ENCODE measurements at regions of chr9 and their contacts with region 1.

Region 1: GRCh38 chr9:137605121-137606004 is at the start of gene ARRDC1:
- DNase-seq: peak; percentile 88 to 96 (median 94)
- H3K4me3 ChIP-seq: peak within 1 kb of the TSS; percentile 41 to 93 (median 74)
- H3K4me3 Mint-ChIP-seq: peak within 1 kb of the TSS; percentile 86 to 96
- H3K27ac ChIP-seq: peak within 1 kb of the TSS; percentile 80 to 82
- H3K27ac Mint-ChIP-seq: peak within 1 kb of the TSS; percentile 69 to 95 (median 91)
- H3K4me1 ChIP-seq: peaks cover 62 to 64% of the 10 kb centered on the region in 2 donors
- H3K4me1 Mint-ChIP-seq: peaks cover 68% of the 10 kb centered on the region
- H3K27me3 ChIP-seq: no peaks in the 10 kb centered on the region
- H3K27me3 Mint-ChIP-seq: peaks cover 0 to 10% (median 6%) of the 10 kb centered on the region in 3 donors
- CTCF ChIP-seq: no peak
- polyA plus RNA-seq, gene ARRDC1: 83.2 to 454 (median 87.6) TPM

Region 2: DNA sequence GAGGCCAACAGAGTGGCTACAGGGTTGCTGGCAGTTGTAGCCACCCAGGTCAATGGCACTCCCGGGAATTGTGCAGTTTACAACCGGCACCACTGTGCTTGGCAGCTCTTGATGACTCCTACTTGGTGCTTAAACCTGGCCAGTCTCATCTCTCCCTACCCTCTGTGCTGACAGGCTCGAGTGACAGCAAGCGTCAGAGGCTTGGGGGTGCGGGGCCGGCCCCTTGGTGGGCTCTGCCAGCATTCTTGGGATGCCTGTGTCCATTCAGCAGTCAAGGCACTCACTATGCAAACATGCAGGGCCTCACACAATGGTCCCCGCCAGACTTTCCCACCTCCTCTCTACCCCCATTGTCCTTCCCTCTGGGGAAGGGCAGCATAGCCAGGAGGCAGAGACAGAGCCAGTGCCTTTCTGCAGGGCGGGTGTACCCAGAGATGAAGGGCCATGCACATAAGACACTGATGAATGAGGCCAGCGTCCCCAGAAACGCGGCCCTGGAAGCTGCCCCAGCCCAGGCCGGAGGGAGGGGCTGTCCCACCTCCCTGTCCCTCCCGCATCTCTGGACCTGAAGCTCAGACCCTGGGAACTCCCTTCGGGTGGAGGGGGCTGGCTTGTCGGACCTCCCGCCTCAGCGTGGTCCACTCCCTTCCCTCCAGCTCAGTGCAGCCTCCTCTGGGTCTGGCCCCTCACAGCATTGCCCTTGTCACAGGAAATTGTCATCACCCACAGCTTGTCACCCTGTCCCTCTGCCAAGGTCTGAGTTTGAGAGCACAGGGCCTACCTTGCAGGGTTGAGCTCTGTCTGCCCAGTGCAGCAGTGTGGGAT is 1033.1 kb before region 1 on chr9:
- intact Hi-C with region 1: no loop called
- DNase-seq: no peak
- H3K4me3 ChIP-seq: no peak overlapping the region
- H3K4me3 Mint-ChIP-seq: no peak overlapping the region
- H3K27ac ChIP-seq: no peak overlapping the region
- H3K27ac Mint-ChIP-seq: no peak overlapping the region
- H3K4me1 ChIP-seq: peaks cover 0 to 11% of the 10 kb centered on the region in 2 donors
- H3K4me1 Mint-ChIP-seq: peaks cover 5% of the 10 kb centered on the region
- H3K27me3 ChIP-seq: no peaks in the 10 kb centered on the region
- H3K27me3 Mint-ChIP-seq: peaks cover 0 to 11% (median 7%) of the 10 kb centered on the region in 3 donors
- CTCF ChIP-seq: no peak

Region 3: DNA sequence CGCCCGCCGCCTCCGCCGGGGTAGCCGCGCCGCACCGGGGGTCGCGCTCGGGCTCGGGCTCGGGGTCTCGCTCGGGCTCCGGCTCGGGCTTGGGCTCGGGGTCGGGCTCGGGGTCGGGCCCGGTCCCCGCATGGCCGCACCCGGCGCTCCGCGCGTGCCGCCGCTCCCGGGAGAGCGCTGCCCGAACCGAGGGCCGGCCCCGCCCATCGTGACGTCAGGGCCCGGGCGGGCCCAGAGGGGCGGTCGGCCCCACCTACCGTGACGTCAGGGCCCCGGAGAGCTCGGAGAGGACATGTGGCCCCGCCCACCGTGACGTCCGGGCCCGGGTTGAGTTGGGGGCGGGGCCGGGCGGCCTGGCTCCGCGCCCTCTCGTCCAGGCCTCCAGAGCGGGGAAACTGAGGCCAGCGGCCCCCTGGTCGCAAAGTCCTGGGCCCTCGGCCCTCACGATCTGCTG is 146.2 kb before region 1 on chr9 and contains the start of gene NSMF:
- intact Hi-C with region 1: loop called in 1 of 2 experiments (anchors 10 kb)
- DNase-seq: peak; percentile 90 to 95 (median 92)
- H3K4me3 ChIP-seq: peak within 1 kb of the TSS; percentile 28 to 75 (median 46)
- H3K4me3 Mint-ChIP-seq: peak within 1 kb of the TSS; percentile 59 to 76
- H3K27ac ChIP-seq: peak within 1 kb of the TSS; percentile 31 to 87
- H3K27ac Mint-ChIP-seq: peak within 1 kb of the TSS; percentile 54 to 89 (median 72)
- H3K4me1 ChIP-seq: peaks cover 26 to 46% of the 10 kb centered on the region in 2 donors
- H3K4me1 Mint-ChIP-seq: peaks cover 10% of the 10 kb centered on the region
- H3K27me3 ChIP-seq: peaks cover 0 to 15% of the 10 kb centered on the region in 2 donors
- H3K27me3 Mint-ChIP-seq: peaks cover 5 to 19% (median 11%) of the 10 kb centered on the region in 3 donors
- CTCF ChIP-seq: no peak
- polyA plus RNA-seq, gene NSMF: 4.6 to 68.4 (median 5.3) TPM

Region 4: DNA sequence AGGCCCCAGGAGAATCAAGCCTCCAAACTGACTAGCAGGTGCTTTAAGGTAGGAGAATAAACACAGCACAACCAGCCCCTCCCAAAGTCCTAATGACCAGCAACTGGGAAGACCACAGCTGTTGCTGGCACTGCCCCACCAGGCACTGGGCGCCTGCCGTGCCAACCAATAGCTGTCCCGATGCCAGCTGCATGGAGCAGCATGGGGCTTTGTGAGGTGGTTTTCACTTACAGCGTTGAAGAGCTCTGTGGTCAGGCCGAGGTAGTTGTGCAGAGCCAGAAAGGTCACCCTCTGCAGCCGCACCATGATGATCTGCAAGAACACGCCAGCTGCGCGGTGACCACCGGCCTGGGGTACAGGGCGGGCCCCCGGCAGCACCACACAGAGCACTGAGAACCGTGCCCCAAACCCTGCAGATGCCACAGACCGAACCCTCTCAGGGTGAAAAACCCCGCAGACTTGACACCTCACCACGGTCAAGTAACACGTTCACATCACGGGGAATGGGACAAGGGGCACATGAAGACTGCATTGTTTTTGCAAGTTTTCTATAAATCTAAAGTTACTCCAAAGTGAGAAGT is 83.9 kb before region 1 on chr9:
- intact Hi-C with region 1: no loop called
- DNase-seq: no peak
- H3K4me3 ChIP-seq: no peak overlapping the region
- H3K4me3 Mint-ChIP-seq: no peak overlapping the region
- H3K27ac ChIP-seq: no peak overlapping the region
- H3K27ac Mint-ChIP-seq: no peak overlapping the region
- H3K4me1 ChIP-seq: no peaks in the 10 kb centered on the region
- H3K4me1 Mint-ChIP-seq: peaks cover 2% of the 10 kb centered on the region
- H3K27me3 ChIP-seq: no peaks in the 10 kb centered on the region
- H3K27me3 Mint-ChIP-seq: peaks cover 0 to 2% (median 2%) of the 10 kb centered on the region in 3 donors
- CTCF ChIP-seq: no peak

Region 5: DNA sequence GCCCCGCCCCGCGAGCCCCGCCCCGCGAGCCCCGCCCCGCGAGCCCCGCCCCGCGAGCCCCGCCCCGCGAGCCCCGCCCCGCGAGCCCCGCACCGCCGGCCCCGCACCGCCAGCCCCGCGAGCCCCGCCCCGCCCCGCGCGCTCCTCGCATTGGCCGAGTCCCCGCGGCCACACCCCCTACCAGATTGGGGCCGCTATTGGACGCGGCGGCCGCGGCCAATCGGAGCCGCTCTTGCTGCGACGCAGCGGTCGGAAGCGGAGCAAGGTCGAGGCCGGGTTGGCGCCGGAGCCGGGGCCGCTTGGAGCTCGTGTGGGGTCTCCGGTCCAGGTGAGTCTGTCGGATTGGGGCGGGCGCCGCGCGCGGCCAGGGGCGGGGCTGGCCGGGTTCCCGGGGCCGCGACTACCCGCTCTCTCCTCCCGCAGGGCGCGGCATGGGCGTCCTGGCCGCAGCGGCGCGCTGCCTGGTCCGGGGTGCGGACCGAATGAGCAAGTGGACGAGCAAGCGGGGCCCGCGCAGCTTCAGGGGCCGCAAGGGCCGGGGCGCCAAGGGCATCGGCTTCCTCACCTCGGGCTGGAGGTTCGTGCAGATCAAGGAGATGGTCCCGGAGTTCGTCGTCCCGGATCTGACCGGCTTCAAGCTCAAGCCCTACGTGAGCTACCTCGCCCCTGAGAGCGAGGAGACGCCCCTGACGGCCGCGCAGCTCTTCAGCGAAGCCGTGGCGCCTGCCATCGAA is 53.5 kb before region 1 on chr9 and contains the start of gene MRPL41:
- intact Hi-C with region 1: loop called in 1 of 2 experiments (anchors 10 kb)
- DNase-seq: peak; percentile 79 to 90 (median 86)
- H3K4me3 ChIP-seq: peak within 1 kb of the TSS; percentile 50 to 91 (median 74)
- H3K4me3 Mint-ChIP-seq: peak within 1 kb of the TSS; percentile 77 to 78
- H3K27ac ChIP-seq: peak within 1 kb of the TSS in 1 of 2 donors; percentile 55
- H3K27ac Mint-ChIP-seq: peak within 1 kb of the TSS in 4 of 7 donors; percentile 20 to 79 (median 72)
- H3K4me1 ChIP-seq: peaks cover 16 to 24% of the 10 kb centered on the region in 2 donors
- H3K4me1 Mint-ChIP-seq: peaks cover 13% of the 10 kb centered on the region
- H3K27me3 ChIP-seq: no peaks in the 10 kb centered on the region
- H3K27me3 Mint-ChIP-seq: no peaks in the 10 kb centered on the region
- CTCF ChIP-seq: no peak
- polyA plus RNA-seq, gene MRPL41: 17.3 to 49.4 (median 33.2) TPM

Region 6: DNA sequence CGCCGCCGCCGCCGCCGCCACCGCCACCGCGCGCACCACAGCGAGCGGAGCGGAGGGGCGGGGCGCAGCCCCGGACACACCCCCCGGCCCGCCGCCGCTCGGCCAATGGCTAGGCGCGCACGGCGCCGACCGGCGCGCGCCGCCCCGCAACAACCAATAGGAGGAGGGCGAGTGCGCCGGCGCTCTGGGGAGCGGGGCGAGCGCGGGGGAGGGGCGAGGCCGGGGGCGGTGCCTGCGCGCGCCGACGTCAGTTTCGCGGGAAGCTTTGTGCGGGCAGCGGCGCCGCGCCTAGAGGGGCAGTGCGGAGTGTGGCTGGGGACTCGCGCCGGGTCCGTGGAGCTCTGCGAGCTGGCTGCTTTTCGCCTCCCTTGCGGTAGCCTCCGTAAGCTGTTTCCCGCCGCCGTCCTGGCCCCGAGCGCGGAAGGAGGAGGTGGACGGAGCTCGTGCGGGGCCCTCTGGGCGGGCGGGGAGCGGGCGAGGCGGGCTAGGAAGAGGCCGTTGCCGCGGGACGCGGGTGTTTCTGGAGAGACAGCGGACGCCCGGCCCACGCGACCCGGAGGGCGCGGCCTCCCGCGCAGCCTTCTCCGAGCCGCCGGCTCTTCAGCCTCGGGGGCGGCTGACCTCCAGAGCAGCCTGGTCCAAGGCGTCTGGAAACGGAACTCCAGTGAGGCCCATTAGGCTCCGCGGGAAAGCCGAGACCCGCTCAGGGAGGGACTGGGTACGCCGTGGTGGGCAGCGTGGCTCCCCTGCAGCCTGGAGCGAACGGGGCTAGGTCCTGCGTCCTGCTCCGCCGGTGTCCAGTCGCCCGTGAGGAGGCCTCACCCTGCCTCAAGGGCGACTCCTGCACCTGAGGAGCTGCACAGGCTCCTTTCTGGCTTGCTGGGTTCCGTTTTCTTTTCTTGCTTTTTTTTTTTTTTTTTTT is 14.6 kb before region 1 on chr9 and contains the start of gene ZMYND19:
- intact Hi-C with region 1: loop called (anchors 2 kb)
- DNase-seq: peak; percentile 83 to 90 (median 86)
- H3K4me3 ChIP-seq: peak within 1 kb of the TSS; percentile 49 to 87 (median 56)
- H3K4me3 Mint-ChIP-seq: peak within 1 kb of the TSS; percentile 96 to 100
- H3K27ac ChIP-seq: peak within 1 kb of the TSS in 1 of 2 donors; percentile 71
- H3K27ac Mint-ChIP-seq: peak within 1 kb of the TSS; percentile 81 to 96 (median 92)
- H3K4me1 ChIP-seq: peaks cover 28 to 37% of the 10 kb centered on the region in 2 donors
- H3K4me1 Mint-ChIP-seq: peaks cover 28% of the 10 kb centered on the region
- H3K27me3 ChIP-seq: no peaks in the 10 kb centered on the region
- H3K27me3 Mint-ChIP-seq: peaks cover 0 to 4% (median 2%) of the 10 kb centered on the region in 3 donors
- CTCF ChIP-seq: no peak
- polyA plus RNA-seq, gene ZMYND19: 1.9 to 12.4 (median 4.5) TPM

Region 7: DNA sequence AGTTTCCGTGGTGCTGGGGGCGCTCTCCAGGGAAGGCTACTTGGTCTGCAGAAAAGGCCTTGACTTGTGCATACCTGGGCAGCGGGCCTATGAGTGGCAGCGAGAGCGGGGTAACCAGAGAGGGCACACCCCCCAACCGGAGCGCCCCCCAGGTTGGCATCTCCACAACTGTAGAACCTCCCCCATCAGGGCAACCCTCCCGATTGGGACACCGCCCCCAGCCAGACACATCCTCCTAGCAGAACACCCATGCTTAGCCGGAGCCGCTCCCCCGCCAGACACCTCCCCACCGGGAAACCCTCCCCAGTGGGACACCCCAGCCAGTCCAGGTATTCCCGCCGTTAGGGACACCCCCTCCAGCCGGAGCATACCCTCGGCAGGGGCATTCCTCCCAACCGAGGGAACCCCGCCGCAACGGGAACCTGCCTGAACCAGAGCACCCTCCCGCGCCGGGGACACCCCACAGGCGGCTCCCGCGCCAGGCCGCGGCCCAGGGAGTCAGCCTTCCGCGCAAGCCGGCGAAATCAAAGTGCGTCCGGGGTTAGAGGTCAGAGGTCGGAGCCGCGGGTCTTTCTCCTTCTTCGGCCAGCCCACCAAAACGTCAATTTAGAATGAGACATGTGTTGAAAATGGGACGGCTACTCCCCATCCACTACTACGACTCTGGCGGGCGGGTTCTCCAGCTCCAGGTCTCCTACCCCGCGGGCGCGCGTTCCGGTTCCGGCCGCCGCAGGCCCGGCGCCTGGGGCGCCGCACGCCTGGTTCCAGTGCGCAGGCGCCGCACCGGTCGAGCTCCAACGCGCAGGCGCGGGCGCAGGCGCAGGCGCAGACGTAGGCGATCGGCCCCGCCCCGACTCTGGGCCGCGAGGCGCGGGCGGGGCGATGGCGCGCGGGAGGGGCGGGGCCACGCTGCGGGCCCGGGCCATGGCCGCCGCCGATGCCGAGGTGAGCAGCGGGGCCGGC is 13.0 kb after region 1 on chr9 and contains the start of gene EHMT1:
- intact Hi-C with region 1: loop called in 1 of 2 experiments (anchors 1 kb)
- DNase-seq: peak; percentile 79 to 87 (median 84)
- H3K4me3 ChIP-seq: peak within 1 kb of the TSS; percentile 79 to 96 (median 94)
- H3K4me3 Mint-ChIP-seq: peak within 1 kb of the TSS; percentile 91 to 95
- H3K27ac ChIP-seq: peak within 1 kb of the TSS; percentile 83 to 94
- H3K27ac Mint-ChIP-seq: peak within 1 kb of the TSS; percentile 90 to 98 (median 95)
- H3K4me1 ChIP-seq: peaks cover 32 to 40% of the 10 kb centered on the region in 2 donors
- H3K4me1 Mint-ChIP-seq: peaks cover 36% of the 10 kb centered on the region
- H3K27me3 ChIP-seq: no peaks in the 10 kb centered on the region
- H3K27me3 Mint-ChIP-seq: no peaks in the 10 kb centered on the region
- CTCF ChIP-seq: no peak
- polyA plus RNA-seq, gene EHMT1: 10.1 to 46.5 (median 15.0) TPM

Region 8: DNA sequence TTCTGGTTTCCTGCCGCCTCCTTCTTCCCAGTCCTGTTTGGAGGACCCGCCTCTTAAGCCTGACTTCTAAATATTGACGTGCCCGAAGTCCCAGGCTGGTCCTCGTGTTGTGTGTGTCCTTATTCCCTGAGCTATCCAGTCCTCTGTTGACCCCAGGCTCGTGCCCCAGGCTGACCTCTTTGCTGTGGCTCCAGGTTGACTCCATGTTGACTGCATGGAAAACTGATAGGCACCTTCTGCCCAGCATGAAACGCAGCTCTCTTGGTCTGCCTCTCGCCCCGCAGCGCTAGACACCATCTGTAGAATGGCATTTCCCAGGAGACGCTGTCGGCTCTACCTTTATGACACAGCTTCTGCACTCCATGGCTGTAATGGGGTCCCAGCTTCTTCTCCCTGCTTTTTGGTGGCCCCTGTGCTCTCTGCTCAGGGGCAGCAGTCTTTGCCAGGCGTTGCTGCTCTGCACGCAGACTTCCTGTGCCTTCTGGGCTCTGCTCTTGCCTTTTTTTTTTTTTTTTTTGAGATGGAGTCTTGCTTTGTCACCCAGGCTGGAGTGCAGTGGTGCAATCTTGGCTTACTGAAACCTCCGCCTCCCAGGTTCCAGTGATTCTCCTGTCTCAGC is 41.8 kb after region 1 on chr9:
- intact Hi-C with region 1: no loop called
- DNase-seq: peak; percentile 23 to 44 (median 33)
- H3K4me3 ChIP-seq: peak overlapping the region; percentile 23 to 77 (median 27)
- H3K4me3 Mint-ChIP-seq: peak overlapping the region; percentile 86 to 94
- H3K27ac ChIP-seq: peak overlapping the region; percentile 74 to 86
- H3K27ac Mint-ChIP-seq: peak overlapping the region; percentile 81 to 97 (median 93)
- H3K4me1 ChIP-seq: peaks cover 43 to 56% of the 10 kb centered on the region in 2 donors
- H3K4me1 Mint-ChIP-seq: peaks cover 53% of the 10 kb centered on the region
- H3K27me3 ChIP-seq: no peaks in the 10 kb centered on the region
- H3K27me3 Mint-ChIP-seq: peaks cover 0 to 2% (median 2%) of the 10 kb centered on the region in 3 donors
- CTCF ChIP-seq: no peak